AG04449 (cell line): ENCODE measurements at regions of chr17 and their contacts with region 1.

Region 1: GRCh38 chr17:75515496-75516254 is at the start of gene CASKIN2:
- DNase-seq: peak; percentile 10
- H3K4me3 ChIP-seq: peak within 1 kb of the TSS; percentile 80
- CTCF ChIP-seq: peak; percentile 100

Region 2: DNA sequence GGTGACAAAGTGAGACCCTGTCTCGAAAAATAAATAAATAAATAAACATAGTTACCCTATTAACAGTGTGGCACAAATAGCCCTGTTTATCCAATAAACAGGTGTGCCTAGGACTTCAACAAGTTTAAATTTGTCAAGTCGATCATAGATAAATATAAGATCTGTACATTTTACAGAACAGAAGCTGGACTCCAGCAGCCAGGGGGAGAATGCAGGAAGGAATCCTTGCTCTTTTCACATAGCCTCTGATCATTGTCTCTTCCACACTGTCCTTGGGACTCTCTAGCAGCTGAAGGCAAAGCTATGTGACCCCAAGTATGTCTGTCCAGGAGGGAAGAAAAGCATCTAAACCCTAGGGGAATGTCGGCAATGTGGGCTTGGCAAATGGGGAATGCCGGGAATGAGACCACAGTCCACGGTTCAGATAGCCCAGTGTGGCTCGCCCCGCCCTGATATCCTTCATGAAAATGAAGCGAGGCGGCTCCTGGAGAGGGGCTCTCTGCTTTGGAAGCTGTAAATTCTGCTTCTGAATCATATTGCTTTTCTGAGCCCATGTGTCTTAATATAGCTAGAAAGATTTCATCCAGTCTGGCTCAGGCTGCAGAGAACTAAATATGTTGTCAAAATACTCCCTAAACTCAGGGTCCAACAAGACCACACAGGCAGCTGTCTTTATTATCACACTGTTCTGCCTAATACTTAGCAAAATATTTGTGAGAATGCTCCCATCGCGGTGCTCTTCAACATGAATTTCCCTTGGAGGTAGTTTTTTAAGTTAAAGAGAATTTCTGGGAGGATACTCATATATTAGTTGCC is 85.3 kb before region 1 on chr17:
- CTCF ChIA-PET with region 1: interaction called, 57 read pairs
- POLR2A ChIA-PET with region 1: interaction called, 6 read pairs
- DNase-seq: peak; percentile 82
- H3K4me3 ChIP-seq: no peak overlapping the region; the same call in 1 of the 2 replicates
- CTCF ChIP-seq: no peak

Region 3: DNA sequence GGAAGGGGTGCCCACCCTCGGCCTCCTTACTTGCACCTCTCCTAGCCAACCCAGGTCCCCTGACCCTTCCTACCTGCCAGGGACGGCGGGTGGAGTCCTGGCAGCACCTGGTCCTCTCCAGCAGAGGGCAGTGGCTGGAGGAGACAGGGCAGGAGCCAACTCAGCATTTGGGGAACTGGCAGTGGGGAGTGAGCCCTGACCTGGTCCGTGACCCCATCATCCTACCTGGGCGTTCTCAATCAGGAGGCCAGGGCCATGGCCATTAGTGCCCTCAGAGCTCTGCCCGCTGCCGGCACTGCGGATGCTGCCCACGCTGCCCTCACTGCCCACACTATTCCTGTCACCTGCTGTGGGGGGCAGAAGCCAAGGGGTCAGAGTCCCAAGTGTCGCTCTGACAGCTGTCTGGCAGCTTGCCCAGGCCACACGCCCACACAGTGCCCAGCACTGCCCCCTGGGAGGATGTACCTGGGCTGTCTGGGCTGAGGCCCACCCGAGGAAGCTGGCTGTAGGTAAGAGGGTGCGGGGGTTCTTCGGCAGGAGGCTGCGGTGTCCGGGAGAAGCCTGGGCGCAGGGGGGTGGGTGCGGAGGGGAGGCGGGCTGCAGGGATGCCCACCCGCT is 11.2 kb before region 1 on chr17:
- CTCF ChIA-PET with region 1: interaction called, 11 read pairs
- POLR2A ChIA-PET with region 1: interaction called, 3 read pairs
- DNase-seq: no peak
- H3K4me3 ChIP-seq: no peak overlapping the region
- CTCF ChIP-seq: peak; percentile 61

Region 4: DNA sequence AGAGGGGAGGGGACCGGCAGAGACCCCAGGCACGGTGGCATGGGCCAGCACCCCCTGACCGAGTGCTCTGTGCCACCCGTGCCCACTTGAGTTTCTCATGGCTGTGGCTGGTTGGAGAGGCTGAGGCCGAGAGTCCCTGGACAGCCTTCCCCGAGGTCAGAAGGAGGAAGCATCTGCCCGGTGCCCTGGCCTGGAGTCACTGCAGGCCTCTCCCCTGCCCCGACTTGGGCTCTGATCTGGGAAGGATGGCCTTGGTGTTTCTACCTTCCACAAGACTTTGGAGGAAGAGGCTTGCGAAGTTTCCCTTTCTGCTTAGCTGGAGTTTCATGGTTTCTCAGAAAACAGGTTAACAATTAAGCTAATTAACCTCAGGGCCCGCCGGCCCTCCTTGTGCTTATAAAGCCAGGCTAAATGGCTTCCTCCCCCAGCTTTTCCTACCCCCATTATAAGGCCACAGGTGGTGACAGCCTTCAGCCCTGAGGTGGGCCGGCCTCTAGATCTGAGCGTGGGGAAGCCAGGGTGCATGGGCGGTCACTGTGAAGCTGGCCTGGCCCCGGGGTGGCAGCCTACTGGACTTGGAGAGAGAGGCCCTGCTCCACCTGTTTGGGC is 27.2 kb after region 1 on chr17:
- CTCF ChIA-PET with region 1: no interaction called
- POLR2A ChIA-PET with region 1: no interaction called
- DNase-seq: no peak
- H3K4me3 ChIP-seq: no peak overlapping the region
- CTCF ChIP-seq: no peak